Endothelial cell of umbilical vein (primary cell): ENCODE measurements at regions of chr5 and their contacts with region 1.

Region 1: DNA sequence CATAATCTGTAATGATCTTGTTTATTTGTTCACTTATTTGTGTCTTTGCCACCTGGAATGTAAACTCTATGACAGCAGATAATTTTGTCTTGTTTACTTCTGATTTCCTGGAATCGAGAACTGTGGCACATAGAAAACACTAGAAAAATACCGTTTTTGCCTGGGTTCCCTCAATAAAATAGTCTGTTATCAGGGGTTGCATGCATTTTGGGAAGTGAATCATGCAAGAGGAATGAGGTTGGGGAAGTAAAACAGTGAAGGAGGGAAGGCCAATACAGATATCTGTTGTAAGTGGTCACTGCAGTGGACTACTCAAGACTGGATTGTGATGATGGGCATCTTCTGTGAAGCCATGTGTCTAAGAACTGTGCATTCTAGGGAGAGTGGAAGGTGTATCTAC is 45.2 kb upstream of the IL6ST start:
- DNase-seq: peak; percentile 72
- H3K4me3 ChIP-seq: no peak overlapping the region
- H3K27ac ChIP-seq: peak overlapping the region; percentile 83
- H3K4me1 ChIP-seq: peaks cover 23% of the 10 kb centered on the region
- H3K27me3 ChIP-seq: no peaks in the 10 kb centered on the region
- CTCF ChIP-seq: no peak
- POLR2A ChIP-seq: no peak

Region 2: GRCh38 chr5:56050551-56051255 is 10.7 kb after region 1 on chr5:
- CTCF ChIA-PET with region 1: interaction called, 3 read pairs
- POLR2A ChIA-PET with region 1: no interaction called
- dilution Hi-C with region 1: no loop called
- intact Hi-C with region 1: loop called (anchors 1 kb)
- DNase-seq: peak; percentile 90
- H3K4me3 ChIP-seq: peak overlapping the region in 1 of 3 experiments; percentile 4
- H3K27ac ChIP-seq: peak overlapping the region; percentile 15
- H3K4me1 ChIP-seq: peaks cover 15% of the 10 kb centered on the region
- H3K27me3 ChIP-seq: no peaks in the 10 kb centered on the region
- CTCF ChIP-seq: no peak
- POLR2A ChIP-seq: no peak